Mammary epithelial cell (primary cell): ENCODE measurements at regions of chr18 and their contacts with region 1.

Region 1: GRCh38 chr18:43341014-43341413 is 63.7 kb upstream of the SYT4 start:
- DNase-seq: no peak
- H3K4me3 ChIP-seq: no peak overlapping the region
- H3K27ac ChIP-seq: no peak overlapping the region
- H3K4me1 ChIP-seq: no peaks in the 10 kb centered on the region
- H3K27me3 ChIP-seq: peaks cover 2% of the 10 kb centered on the region
- CTCF ChIP-seq: no peak

Region 2: DNA sequence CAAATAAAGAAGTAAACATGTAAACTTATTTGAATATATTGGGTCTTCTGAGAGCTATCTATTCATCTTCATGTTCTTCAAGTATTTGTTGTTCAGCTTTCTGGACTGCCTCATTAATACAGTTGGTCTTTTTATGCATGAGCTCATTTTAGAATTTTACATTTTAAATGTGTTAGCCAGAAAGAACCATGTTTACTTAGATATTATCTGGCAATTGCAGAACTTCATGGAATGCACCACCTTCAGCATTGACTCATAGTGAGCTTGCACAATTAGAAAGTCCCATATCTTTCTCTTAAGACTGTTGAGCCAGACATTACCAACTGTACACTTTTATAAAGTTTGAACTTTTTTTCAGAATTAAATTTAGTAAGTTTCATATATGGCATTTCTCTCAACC is 762.2 kb before region 1 on chr18:
- CTCF ChIA-PET with region 1: no interaction called
- dilution Hi-C with region 1: no loop called
- in situ Hi-C with region 1: no loop called
- intact Hi-C with region 1: loop called (anchors 10 kb)
- DNase-seq: peak; percentile 23
- H3K4me3 ChIP-seq: no peak overlapping the region
- H3K27ac ChIP-seq: no peak overlapping the region
- H3K4me1 ChIP-seq: no peaks in the 10 kb centered on the region
- H3K27me3 ChIP-seq: no peaks in the 10 kb centered on the region
- CTCF ChIP-seq: no peak

Region 3: DNA sequence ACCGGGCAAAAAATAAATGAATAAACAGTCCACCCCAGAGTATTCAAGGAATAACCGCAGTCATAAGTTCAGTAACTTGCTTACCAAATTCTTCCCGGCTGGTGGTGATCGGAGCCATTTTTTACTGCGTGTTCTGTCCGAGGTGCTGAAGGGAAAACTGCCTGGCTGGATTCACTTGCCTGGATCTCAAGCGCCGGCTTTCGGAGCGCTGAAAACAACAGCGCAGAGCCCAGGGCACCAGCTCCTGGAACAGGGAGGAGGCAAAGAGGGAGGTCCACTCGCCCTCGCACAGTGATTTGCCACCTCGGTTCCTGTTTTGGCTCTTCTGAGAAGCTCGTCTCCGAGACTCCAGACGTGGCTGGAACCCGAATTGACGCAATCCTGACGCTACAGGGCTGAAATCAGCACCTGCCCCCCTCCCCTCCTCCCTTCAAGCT is 63.8 kb before region 1 on chr18 and contains the start of gene SYT4:
- CTCF ChIA-PET with region 1: interaction called, 13 read pairs
- dilution Hi-C with region 1: no loop called
- in situ Hi-C with region 1: no loop called
- intact Hi-C with region 1: no loop called
- DNase-seq: peak; percentile 42
- H3K4me3 ChIP-seq: no peak within 1 kb of the TSS
- H3K27ac ChIP-seq: no peak within 1 kb of the TSS
- H3K4me1 ChIP-seq: no peaks in the 10 kb centered on the region
- H3K27me3 ChIP-seq: peaks cover 5% of the 10 kb centered on the region
- CTCF ChIP-seq: no peak
- total RNA-seq, gene SYT4: not detected